ENCODE measurements at regions of chr17 and their contacts with region 1.

Region 1: DNA sequence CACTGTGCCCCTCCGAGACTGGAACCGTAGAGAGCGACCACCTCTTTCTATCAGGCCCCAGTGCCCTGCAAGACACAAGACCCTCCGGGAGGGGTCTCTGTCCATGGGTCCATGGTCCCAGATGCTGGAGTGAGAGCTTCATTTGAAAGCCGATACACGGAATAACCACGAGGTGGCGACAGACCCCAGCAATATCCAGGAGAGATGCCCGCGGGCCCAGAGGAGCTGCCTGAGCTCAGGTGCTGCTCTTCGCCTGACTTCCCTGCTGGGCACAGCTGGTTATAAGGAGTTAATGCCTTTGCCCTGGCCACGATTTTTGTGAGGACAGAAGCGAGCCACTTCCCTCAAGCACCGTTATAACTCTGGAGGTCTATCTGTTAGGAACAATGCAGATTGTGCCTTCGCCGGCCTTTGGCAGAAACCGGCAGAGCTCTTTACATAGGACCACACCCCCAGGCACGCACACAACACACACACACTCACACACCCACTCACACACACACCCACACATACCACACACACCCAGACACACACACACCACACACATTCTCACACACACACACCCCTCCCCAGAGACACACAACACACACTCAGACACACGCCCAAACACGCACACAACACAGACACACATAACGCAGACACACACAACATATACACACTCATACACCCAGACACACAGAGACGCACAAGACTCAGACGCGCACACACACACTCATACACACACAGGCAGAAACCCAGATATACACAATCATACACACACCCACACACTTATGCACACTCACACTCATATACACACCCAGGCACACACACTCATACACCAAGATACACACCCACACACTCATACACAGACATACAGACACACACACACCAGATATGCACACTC is 436.4 kb downstream of the SOX9 start:
- DNase-seq: peak; percentile 15 to 62 (median 47)
- ATAC-seq: no peak
- H3K4me3 ChIP-seq: no peak overlapping the region
- H3K4me3 Mint-ChIP-seq: no peak overlapping the region
- H3K27ac ChIP-seq: no peak overlapping the region
- H3K27ac Mint-ChIP-seq: no peak overlapping the region
- H3K4me1 ChIP-seq: no peaks in the 10 kb centered on the region
- H3K4me1 Mint-ChIP-seq: no peaks in the 10 kb centered on the region
- H3K27me3 ChIP-seq: no peaks in the 10 kb centered on the region
- H3K27me3 Mint-ChIP-seq: peaks cover 2% of the 10 kb centered on the region
- CTCF ChIP-seq: peak; percentile 61

Region 2: DNA sequence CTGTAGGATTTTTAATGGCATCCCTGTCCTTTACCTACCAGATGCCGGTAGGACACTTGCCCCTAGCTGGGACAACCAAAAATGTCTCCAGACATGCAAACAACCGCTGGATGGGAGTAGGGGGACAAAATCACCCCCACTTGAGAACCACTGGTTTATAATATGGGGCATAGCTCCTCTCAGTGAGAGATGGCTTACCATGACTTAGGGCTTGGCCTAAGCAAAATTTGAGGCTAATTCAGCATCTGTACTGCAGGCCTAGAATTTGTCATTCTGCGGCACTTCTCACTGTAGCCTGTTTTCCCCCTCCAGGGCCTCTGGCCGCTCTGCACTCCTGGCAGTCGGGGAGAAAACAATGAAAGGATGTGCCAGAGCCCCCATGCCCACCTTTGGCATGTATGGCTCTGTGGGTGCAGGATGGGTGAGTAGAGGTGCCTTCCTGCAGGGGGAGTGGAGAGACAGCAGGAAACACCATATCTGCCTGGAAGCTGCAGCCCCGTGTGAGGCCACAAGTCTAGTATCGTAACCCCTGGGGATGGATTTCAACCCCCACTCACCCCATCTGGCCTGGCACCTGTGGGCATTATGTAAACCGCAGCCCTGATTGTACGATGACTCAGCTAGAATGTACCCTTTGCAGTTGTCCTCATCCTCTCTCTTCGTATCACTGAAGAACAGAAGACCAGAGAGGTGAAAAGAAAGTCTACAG is 168.3 kb before region 1 on chr17:
- CTCF ChIA-PET with region 1: no interaction called
- POLR2A ChIA-PET with region 1: no interaction called
- intact Hi-C with region 1: no loop called
- DNase-seq: no peak
- ATAC-seq: no peak
- H3K4me3 ChIP-seq: no peak overlapping the region
- H3K4me3 Mint-ChIP-seq: no peak overlapping the region
- H3K27ac ChIP-seq: no peak overlapping the region
- H3K27ac Mint-ChIP-seq: no peak overlapping the region
- H3K4me1 ChIP-seq: no peaks in the 10 kb centered on the region
- H3K4me1 Mint-ChIP-seq: no peaks in the 10 kb centered on the region
- H3K27me3 ChIP-seq: no peaks in the 10 kb centered on the region
- H3K27me3 Mint-ChIP-seq: no peaks in the 10 kb centered on the region
- CTCF ChIP-seq: no peak

Region 3: DNA sequence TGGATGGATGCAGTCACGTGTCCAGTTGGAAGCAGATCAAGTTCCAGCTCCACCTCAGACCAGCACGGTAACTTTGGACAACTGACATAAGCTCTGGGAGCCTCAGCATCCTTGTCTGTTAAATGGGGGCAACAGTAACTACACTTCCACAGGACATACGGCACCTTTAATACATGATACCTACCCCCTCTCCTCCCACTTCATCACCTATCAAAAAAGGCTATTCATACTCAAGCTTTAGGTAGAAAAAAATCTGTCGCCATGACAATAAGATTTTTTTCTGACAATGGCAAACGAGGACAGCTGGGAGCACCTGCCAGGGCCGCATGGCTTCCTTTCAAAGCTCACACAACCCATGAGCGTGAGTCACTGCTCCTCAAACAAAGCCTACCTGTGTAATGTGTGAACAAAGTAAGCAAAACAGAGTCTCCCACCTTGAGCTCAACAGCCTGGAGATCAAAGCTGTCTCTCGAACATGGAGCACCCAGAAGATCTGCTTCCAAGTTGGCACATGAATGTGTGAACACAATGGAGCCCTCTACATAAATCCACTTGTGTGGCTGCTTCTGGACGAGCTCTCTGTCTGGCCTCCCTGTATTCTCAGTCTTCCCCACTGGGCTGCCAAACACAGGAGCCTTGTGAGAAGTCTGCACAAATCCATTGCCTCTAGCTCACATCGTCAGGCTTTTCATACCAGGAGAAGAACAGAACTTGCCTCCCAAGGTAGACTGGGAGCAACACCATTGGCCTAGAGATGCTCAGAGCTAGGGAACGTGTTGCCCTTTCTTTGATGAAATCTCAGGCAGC is 23.3 kb after region 1 on chr17:
- CTCF ChIA-PET with region 1: interaction called, 20 read pairs
- POLR2A ChIA-PET with region 1: no interaction called
- intact Hi-C with region 1: no loop called
- DNase-seq: no peak
- ATAC-seq: no peak
- H3K4me3 ChIP-seq: no peak overlapping the region
- H3K4me3 Mint-ChIP-seq: no peak overlapping the region
- H3K27ac ChIP-seq: no peak overlapping the region
- H3K27ac Mint-ChIP-seq: no peak overlapping the region
- H3K4me1 ChIP-seq: no peaks in the 10 kb centered on the region
- H3K4me1 Mint-ChIP-seq: no peaks in the 10 kb centered on the region
- H3K27me3 ChIP-seq: no peaks in the 10 kb centered on the region
- H3K27me3 Mint-ChIP-seq: peaks cover 18% of the 10 kb centered on the region
- CTCF ChIP-seq: no peak

Region 4: DNA sequence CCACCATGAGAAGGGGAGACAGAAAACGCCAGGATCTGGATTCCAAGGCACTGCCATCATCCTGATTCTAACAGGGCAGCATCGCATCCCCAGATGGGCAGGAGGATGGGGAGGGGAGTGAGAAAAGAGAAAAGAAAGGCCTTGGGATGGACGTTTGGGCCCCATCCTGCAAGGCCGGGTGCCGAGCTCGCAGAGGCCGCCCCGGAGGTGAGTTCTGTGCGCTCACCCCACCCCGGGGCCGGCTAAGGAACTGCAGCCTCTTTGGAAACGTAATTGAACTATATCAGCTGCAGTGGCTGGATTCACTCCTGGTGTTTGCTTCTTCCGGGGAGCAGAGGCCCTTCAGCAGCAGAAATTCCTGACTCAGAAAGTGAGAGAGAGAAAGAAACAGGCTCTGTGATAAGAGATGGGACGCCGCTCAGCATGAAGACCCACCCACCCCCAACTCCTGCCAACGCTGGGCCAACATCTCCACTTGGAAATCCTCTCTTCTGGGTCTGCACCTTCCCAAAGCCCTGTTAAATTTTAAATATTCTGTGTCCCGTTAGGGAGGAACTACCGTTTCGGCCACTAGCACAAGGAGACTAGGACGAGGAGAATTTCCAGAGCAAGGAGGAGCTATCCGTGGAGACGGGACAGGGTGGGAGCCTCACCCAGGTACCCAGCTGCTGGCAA is 599.1 kb after region 1 on chr17:
- CTCF ChIA-PET with region 1: interaction called, 9 read pairs
- POLR2A ChIA-PET with region 1: no interaction called
- intact Hi-C with region 1: loop called in 1 of 2 experiments (anchors 2 kb)
- DNase-seq: peak; percentile 19 to 70 (median 53)
- ATAC-seq: peak; percentile 78
- H3K4me3 ChIP-seq: no peak overlapping the region
- H3K4me3 Mint-ChIP-seq: no peak overlapping the region
- H3K27ac ChIP-seq: no peak overlapping the region
- H3K27ac Mint-ChIP-seq: no peak overlapping the region
- H3K4me1 ChIP-seq: no peaks in the 10 kb centered on the region
- H3K4me1 Mint-ChIP-seq: peaks cover 3% of the 10 kb centered on the region
- H3K27me3 ChIP-seq: peaks cover 0 to 4% of the 10 kb centered on the region in 2 experiments
- H3K27me3 Mint-ChIP-seq: peaks cover 29% of the 10 kb centered on the region
- CTCF ChIP-seq: peak; percentile 62

Region 5: DNA sequence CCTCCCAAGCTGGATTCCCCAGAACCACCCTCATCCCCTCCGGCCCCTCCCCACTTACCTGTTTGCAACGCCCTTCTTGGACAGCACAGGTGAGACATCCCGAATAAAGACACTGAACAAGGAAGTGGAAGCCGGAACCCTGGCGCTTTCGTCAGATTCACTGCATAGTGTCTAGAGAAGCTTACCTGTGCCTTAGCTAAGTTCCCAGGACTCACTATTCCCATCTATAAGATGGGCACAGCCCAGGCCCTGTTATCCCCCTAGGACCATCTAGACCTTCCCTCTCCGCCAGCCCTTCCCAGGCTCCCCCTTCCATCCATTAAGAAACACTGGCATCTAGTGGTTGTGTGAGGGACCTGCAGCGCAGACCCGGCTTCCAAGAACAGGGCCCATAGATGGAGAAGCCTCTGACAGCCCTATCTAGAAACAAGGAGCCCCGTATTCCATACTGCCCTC is 1619.4 kb after region 1 on chr17:
- CTCF ChIA-PET with region 1: no interaction called
- POLR2A ChIA-PET with region 1: no interaction called
- intact Hi-C with region 1: loop called in 1 of 2 experiments (anchors 10 kb)
- DNase-seq: peak in 6 of 9 experiments; percentile 12 to 58 (median 31)
- ATAC-seq: no peak
- H3K4me3 ChIP-seq: no peak overlapping the region
- H3K4me3 Mint-ChIP-seq: no peak overlapping the region
- H3K27ac ChIP-seq: no peak overlapping the region
- H3K27ac Mint-ChIP-seq: no peak overlapping the region
- H3K4me1 ChIP-seq: no peaks in the 10 kb centered on the region
- H3K4me1 Mint-ChIP-seq: no peaks in the 10 kb centered on the region
- H3K27me3 ChIP-seq: peaks cover 0 to 12% of the 10 kb centered on the region in 2 experiments
- H3K27me3 Mint-ChIP-seq: peaks cover 29% of the 10 kb centered on the region
- CTCF ChIP-seq: peak; percentile 38

Measured in CD8-positive, alpha-beta T cell (primary cell).